ENCODE measurements at regions of chr3 and their contacts with region 1.

Region 1: GRCh38 chr3:141561426-141562034 is 74.7 kb downstream of the RASA2 start:
- DNase-seq: peak; percentile 11
- H3K4me3 ChIP-seq: no peak overlapping the region
- H3K27ac ChIP-seq: no peak overlapping the region
- H3K4me1 ChIP-seq: peaks cover 5 to 21% (median 7%) of the 10 kb centered on the region in 4 donors
- H3K27me3 ChIP-seq: no peaks in the 10 kb centered on the region
- CTCF ChIP-seq: peak; percentile 95 to 99 (median 97)
- EP300 ChIP-seq: no peak
- POLR2A ChIP-seq: no peak

Region 2: GRCh38 chr3:141311496-141312353 is 249.8 kb before region 1 on chr3:
- in situ Hi-C with region 1: loop called in 2 of 4 experiments (anchors 10 to 25 kb)
- intact Hi-C with region 1: loop called (anchors 10 kb)
- DNase-seq: peak; percentile 100
- H3K4me3 ChIP-seq: peak overlapping the region; percentile 53 to 74 (median 58)
- H3K27ac ChIP-seq: peak overlapping the region; percentile 69 to 89 (median 80)
- H3K4me1 ChIP-seq: peaks cover 6 to 15% (median 10%) of the 10 kb centered on the region in 4 donors
- H3K27me3 ChIP-seq: no peaks in the 10 kb centered on the region
- CTCF ChIP-seq: peak; percentile 55 to 97 (median 77)
- EP300 ChIP-seq: no peak
- POLR2A ChIP-seq: peak; percentile 69

Region 3: DNA sequence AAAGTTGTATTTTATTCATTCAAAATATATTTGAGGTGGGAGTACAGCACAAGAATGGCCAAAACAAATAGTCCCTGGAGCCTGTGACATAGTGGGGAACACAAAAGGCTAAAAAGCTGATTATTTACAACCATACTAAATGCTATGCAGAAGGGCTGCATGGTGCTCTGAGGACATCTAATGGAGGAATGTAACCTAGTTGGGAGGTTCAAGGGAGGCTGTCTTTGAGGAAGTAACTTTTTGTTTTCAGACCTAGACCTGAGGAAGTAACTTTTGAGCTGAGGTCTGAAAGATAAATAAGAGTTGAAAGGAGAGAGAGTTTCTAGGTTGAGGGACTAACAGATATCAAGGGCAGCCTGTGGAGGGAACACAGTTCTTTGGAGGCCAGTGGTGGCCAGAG is 109.5 kb before region 1 on chr3:
- in situ Hi-C with region 1: loop called in 1 of 4 experiments (anchors 5 kb)
- intact Hi-C with region 1: loop called (anchors 1 kb)
- DNase-seq: no peak
- H3K4me3 ChIP-seq: no peak overlapping the region
- H3K27ac ChIP-seq: peak overlapping the region; percentile 44 to 65 (median 46)
- H3K4me1 ChIP-seq: peaks cover 0 to 40% (median 24%) of the 10 kb centered on the region in 4 donors
- H3K27me3 ChIP-seq: no peaks in the 10 kb centered on the region
- CTCF ChIP-seq: peak; percentile 53 to 60 (median 55)
- EP300 ChIP-seq: no peak
- POLR2A ChIP-seq: no peak

Region 4: DNA sequence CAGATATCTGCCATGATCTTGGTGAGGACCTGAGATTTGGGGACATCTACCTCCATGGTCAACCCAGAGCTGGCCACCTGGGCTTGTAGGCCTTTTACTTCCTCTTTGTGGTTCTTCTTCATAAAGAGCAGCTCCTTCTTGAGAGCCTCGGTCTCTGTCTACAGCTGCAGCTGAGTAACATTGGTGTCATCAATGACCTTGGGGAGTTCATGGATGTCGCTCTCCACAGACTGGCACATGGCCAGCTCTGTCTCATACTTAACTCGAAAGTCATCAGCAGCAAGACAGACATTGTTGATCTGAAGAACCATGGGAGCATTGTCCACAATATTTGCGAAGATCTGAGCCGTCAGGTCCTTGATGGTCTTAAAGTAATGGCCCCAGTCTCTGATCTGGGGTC is 90.4 kb before region 1 on chr3:
- in situ Hi-C with region 1: loop called (anchors 5 to 10 kb)
- intact Hi-C with region 1: no loop called
- DNase-seq: no peak
- H3K4me3 ChIP-seq: no peak overlapping the region
- H3K27ac ChIP-seq: no peak overlapping the region
- H3K4me1 ChIP-seq: no peaks in the 10 kb centered on the region
- H3K27me3 ChIP-seq: no peaks in the 10 kb centered on the region
- CTCF ChIP-seq: no peak
- EP300 ChIP-seq: no peak
- POLR2A ChIP-seq: no peak

Region 5: GRCh38 chr3:141507392-141508066 is 54.0 kb before region 1 on chr3:
- in situ Hi-C with region 1: no loop called
- intact Hi-C with region 1: no loop called
- DNase-seq: no peak
- H3K4me3 ChIP-seq: no peak overlapping the region
- H3K27ac ChIP-seq: no peak overlapping the region
- H3K4me1 ChIP-seq: no peaks in the 10 kb centered on the region
- H3K27me3 ChIP-seq: no peaks in the 10 kb centered on the region
- CTCF ChIP-seq: no peak
- EP300 ChIP-seq: no peak
- POLR2A ChIP-seq: no peak

Region 6: DNA sequence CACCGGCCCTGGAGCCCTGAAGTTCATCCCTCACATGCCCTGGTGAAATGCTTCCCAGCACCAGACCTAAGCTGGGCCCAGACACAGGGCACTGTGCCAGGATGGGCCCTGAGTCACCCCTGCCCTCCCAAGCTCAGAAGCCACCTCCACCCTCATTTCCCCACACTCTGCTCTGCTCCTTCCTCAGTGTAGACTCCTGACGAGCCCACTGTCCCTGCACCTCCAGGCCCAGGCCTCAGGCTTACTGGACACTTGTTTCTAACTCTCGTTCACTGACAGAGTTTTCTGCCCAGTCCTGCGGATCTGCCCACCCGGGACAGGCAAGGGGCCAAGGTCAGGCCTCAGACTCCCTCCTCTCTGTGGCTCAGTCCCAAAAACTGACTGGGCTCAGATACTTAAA is 64.0 kb after region 1 on chr3:
- in situ Hi-C with region 1: no loop called
- intact Hi-C with region 1: no loop called
- DNase-seq: no peak
- H3K4me3 ChIP-seq: no peak overlapping the region
- H3K27ac ChIP-seq: no peak overlapping the region
- H3K4me1 ChIP-seq: no peaks in the 10 kb centered on the region
- H3K27me3 ChIP-seq: no peaks in the 10 kb centered on the region
- CTCF ChIP-seq: no peak
- EP300 ChIP-seq: no peak
- POLR2A ChIP-seq: no peak

Region 7: GRCh38 chr3:141699897-141700296 is 138.4 kb after region 1 on chr3:
- in situ Hi-C with region 1: no loop called
- intact Hi-C with region 1: no loop called
- DNase-seq: no peak
- H3K4me3 ChIP-seq: no peak overlapping the region
- H3K27ac ChIP-seq: no peak overlapping the region
- H3K4me1 ChIP-seq: no peaks in the 10 kb centered on the region
- H3K27me3 ChIP-seq: no peaks in the 10 kb centered on the region
- CTCF ChIP-seq: no peak
- EP300 ChIP-seq: no peak
- POLR2A ChIP-seq: no peak

Measured in transverse colon (tissue), 4 donors.